Naive thymus-derived CD8-positive, alpha-beta T cell (primary cell): ENCODE measurements at regions of chr4 and their contacts with region 1.

Region 1: DNA sequence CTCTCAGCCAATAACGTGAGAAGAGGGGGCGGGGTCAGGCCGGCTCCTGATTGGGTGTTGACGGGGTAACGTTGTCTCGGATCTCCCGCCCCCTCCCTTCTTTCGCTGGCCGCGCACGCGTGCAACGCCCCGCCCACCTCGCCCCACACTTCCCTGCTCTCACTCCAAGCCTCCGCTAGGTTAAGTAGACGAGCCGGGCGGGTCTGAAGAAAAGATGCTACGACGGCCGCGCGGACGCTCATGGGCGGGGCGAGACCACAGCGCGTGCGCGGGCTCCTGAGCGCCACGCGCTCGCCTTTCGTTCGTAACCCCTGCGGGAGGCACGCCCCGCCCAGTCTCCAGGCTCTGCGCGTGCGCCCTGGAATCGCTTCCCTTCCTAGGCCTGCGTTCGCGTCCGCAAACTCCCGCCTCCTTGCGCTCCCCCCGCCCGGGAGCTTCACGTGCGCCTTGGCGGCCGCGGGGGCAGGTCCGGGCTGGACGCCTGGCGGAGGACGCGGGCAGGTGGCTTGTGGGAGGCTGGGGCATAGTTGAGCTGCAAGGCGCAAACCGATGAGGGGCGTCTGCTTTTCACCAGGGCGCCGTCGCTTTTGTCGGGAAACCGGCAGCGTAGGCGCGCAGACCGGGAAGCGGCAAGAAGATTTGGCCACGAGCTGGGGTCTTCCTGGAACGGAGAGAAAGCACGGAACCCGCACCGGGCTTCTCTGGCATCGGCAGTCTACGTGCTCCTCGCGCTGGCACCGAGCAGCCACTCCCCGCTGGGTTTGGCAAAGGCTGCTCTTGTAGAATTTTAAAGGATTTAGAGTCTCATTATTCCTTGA is 467 bp upstream of the PGRMC2 start:
- DNase-seq: peak; percentile 95 to 100 (median 99)
- ATAC-seq: peak; percentile 76 to 82
- H3K4me3 Mint-ChIP-seq: peak overlapping the region; percentile 80 to 93 (median 88)
- H3K27ac Mint-ChIP-seq: peak overlapping the region; percentile 88 to 99 (median 98)
- H3K4me1 Mint-ChIP-seq: peaks cover 20 to 43% (median 40%) of the 10 kb centered on the region in 4 donors
- H3K27me3 Mint-ChIP-seq: no peaks in the 10 kb centered on the region

Region 2: GRCh38 chr4:128060699-128061565 is 227.1 kb before region 1 on chr4 and contains the start of gene LARP1B:
- POLR2A ChIA-PET with region 1: interaction called, 12 read pairs
- DNase-seq: peak; percentile 84 to 95 (median 90)
- ATAC-seq: peak; percentile 87 to 88
- H3K4me3 Mint-ChIP-seq: peak within 1 kb of the TSS; percentile 77 to 91 (median 87)
- H3K27ac Mint-ChIP-seq: peak within 1 kb of the TSS; percentile 59 to 94 (median 91)
- H3K4me1 Mint-ChIP-seq: peaks cover 5 to 20% (median 6%) of the 10 kb centered on the region in 4 donors
- H3K27me3 Mint-ChIP-seq: peaks cover 0 to 4% (median 0%) of the 10 kb centered on the region in 5 donors
- polyA plus RNA-seq, gene LARP1B: 2.9 to 4.0 (median 3.9) TPM

Region 3: DNA sequence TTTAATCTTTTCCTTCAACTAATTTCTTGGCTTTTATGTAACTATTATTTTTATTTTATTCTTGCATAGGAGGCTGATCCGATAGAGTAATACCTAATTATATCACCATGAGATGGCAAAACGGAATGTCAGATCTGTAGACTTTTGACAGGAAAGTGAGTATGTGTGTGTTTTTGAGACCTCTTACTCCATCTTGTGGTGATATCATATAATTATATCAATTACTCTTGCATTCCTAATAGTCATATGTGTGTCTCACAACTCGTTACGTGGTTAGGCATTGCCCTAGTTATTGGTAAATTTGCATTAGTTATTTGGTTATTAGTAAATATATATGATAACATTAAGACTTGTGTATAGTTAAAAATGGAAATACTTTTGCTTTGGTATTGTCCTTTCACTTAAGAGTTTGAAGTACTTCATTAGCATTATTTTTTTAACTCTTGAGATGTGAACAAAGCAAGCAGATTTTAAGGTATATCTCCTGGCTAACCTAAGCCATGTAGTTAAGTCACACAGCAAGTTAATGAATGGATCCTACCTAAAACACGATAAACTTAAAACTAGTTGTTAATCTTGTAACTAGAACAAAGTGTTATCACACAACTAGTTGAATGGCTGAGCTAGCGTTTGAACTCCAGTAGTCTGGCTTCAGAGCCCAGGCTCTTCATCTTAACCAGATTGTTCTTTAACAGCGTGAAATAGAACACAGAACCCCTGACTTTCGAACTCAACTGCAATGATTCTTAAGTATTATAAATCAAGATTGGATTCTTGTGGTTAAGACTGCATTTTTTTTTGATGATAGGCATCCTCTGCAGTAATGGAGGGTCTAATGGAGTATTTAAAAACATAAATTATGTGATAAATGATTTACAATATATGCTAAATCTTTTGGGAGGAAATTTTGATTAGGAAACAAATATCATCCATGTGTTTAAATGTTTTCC is 67.5 kb before region 1 on chr4:
- POLR2A ChIA-PET with region 1: no interaction called
- DNase-seq: peak in 3 of 10 donors; percentile 5 to 17 (median 16)
- ATAC-seq: no peak
- H3K4me3 Mint-ChIP-seq: no peak overlapping the region
- H3K27ac Mint-ChIP-seq: peak overlapping the region in 1 of 10 donors; percentile 7
- H3K4me1 Mint-ChIP-seq: no peaks in the 10 kb centered on the region
- H3K27me3 Mint-ChIP-seq: no peaks in the 10 kb centered on the region

Region 4: DNA sequence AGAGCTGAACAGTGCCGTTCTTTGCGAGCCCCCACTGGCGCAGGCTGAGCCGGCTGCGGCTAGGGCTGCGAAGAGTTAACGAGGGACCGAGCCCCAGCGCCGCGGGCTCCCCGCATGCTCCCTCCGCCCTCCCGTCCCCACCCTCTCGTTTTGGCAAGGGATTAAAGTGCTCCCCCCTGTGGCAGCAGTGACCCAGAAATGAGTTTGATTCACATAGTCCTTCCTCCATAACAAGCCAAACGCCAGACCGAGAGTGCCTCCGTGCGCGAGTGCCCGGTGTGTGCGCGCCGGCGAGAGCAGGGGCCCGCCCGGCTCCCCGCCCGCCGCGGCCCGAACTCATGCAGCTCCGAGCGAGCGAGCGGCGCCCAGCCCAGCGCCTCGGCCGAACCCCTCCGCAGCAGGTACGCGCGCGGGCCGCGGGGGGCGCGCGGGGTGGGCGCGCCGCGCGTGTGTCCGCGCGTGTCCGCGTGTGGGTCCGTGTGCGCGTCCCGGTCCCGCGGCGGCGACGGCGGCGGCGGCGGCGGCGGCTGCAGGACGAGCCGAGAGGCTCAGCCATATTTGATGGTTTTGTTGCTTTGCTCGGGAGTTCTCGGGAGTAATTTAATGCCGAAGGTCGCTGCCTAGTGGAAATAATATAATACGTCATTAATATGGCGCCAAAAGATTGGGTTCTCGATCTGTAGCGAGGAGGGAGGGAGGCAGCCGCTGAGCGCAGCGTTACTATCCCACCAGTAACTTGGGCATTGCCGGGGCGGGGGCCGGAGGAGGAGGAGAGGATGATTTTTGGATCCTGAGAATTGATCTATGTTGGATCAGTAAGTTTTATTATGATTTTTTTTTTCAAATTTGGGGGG is 521.6 kb after region 1 on chr4 and contains the start of gene JADE1:
- POLR2A ChIA-PET with region 1: interaction called, 11 read pairs
- DNase-seq: peak; percentile 72 to 95 (median 88)
- ATAC-seq: peak; percentile 63 to 64
- H3K4me3 Mint-ChIP-seq: peak within 1 kb of the TSS; percentile 92 to 100 (median 98)
- H3K27ac Mint-ChIP-seq: peak within 1 kb of the TSS; percentile 94 to 100 (median 99)
- H3K4me1 Mint-ChIP-seq: peaks cover 8 to 24% (median 16%) of the 10 kb centered on the region in 4 donors
- H3K27me3 Mint-ChIP-seq: no peaks in the 10 kb centered on the region
- polyA plus RNA-seq, gene JADE1: 45.8 to 52.8 (median 47.8) TPM